Caco-2 (cell line): ENCODE measurements at regions of chr4 and their contacts with region 1.

Region 1: GRCh38 chr4:134529629-134530028 is 328.0 kb upstream of the PABPC4L start:
- DNase-seq: no peak
- H3K4me3 ChIP-seq: no peak overlapping the region
- H3K4me3 Mint-ChIP-seq: no peak overlapping the region
- H3K27ac Mint-ChIP-seq: no peak overlapping the region
- H3K4me1 ChIP-seq: no peaks in the 10 kb centered on the region
- H3K4me1 Mint-ChIP-seq: no peaks in the 10 kb centered on the region
- H3K27me3 ChIP-seq: no peaks in the 10 kb centered on the region
- H3K27me3 Mint-ChIP-seq: no peaks in the 10 kb centered on the region
- CTCF ChIP-seq: no peak

Region 2: DNA sequence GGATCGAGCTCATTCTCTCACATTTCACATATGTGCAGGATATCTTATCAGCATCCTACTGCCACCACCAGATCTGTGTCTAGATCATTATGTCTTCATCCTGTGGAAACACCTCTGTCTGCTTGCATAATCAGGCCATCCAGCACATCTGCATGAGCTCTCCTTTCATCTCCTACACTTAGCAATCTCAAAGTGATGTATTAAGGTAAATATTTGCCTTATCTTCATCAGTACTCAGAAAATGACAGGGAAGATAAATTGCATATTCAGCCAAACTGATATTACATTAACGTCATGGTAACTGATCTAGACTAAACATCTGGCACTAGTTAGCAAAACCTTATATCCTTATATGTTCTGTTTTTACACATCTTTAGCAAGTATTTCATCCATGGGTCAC is 120.7 kb before region 1 on chr4:
- CTCF ChIA-PET with region 1: no interaction called
- POLR2A ChIA-PET with region 1: no interaction called
- intact Hi-C with region 1: no loop called
- DNase-seq: no peak
- H3K4me3 ChIP-seq: no peak overlapping the region
- H3K4me3 Mint-ChIP-seq: no peak overlapping the region
- H3K27ac Mint-ChIP-seq: no peak overlapping the region
- H3K4me1 ChIP-seq: no peaks in the 10 kb centered on the region
- H3K4me1 Mint-ChIP-seq: no peaks in the 10 kb centered on the region
- H3K27me3 ChIP-seq: no peaks in the 10 kb centered on the region
- H3K27me3 Mint-ChIP-seq: no peaks in the 10 kb centered on the region
- CTCF ChIP-seq: no peak

Region 3: GRCh38 chr4:134650461-134650860 is 120.8 kb after region 1 on chr4:
- CTCF ChIA-PET with region 1: interaction called, 3 read pairs
- POLR2A ChIA-PET with region 1: no interaction called
- intact Hi-C with region 1: loop called (anchors 1 kb)
- DNase-seq: no peak
- H3K4me3 ChIP-seq: no peak overlapping the region
- H3K4me3 Mint-ChIP-seq: no peak overlapping the region
- H3K27ac Mint-ChIP-seq: no peak overlapping the region
- H3K4me1 ChIP-seq: no peaks in the 10 kb centered on the region
- H3K4me1 Mint-ChIP-seq: no peaks in the 10 kb centered on the region
- H3K27me3 ChIP-seq: no peaks in the 10 kb centered on the region
- H3K27me3 Mint-ChIP-seq: no peaks in the 10 kb centered on the region
- CTCF ChIP-seq: no peak